CD14-positive monocyte (primary cell): ENCODE measurements at regions of chr7 and their contacts with region 1.

Region 1: GRCh38 chr7:157603736-157604135 is 266.9 kb downstream of the DNAJB6 start:
- DNase-seq: no peak
- H3K4me3 ChIP-seq: no peak overlapping the region
- H3K4me3 Mint-ChIP-seq: no peak overlapping the region
- H3K27ac ChIP-seq: no peak overlapping the region
- H3K27ac Mint-ChIP-seq: no peak overlapping the region
- H3K4me1 ChIP-seq: no peaks in the 10 kb centered on the region
- H3K4me1 Mint-ChIP-seq: no peaks in the 10 kb centered on the region
- H3K27me3 ChIP-seq: no peaks in the 10 kb centered on the region
- H3K27me3 Mint-ChIP-seq: peaks cover 2 to 3% (median 2%) of the 10 kb centered on the region in 3 donors
- CTCF ChIP-seq: no peak

Region 2: GRCh38 chr7:157625973-157626742 is 22.4 kb after region 1 on chr7:
- intact Hi-C with region 1: loop called in 1 of 2 experiments (anchors 2 kb)
- DNase-seq: no peak
- H3K4me3 ChIP-seq: no peak overlapping the region
- H3K4me3 Mint-ChIP-seq: no peak overlapping the region
- H3K27ac ChIP-seq: no peak overlapping the region
- H3K27ac Mint-ChIP-seq: no peak overlapping the region
- H3K4me1 ChIP-seq: no peaks in the 10 kb centered on the region
- H3K4me1 Mint-ChIP-seq: no peaks in the 10 kb centered on the region
- H3K27me3 ChIP-seq: peaks cover 0 to 7% of the 10 kb centered on the region in 2 donors
- H3K27me3 Mint-ChIP-seq: peaks cover 2 to 18% (median 12%) of the 10 kb centered on the region in 3 donors
- CTCF ChIP-seq: no peak